Activated CD4-positive, alpha-beta T cell treated with anti-CD3 and anti-CD28 coated beads, Interleukin-2, amount 10 ng/mL, durations not matched to agents 24 days and 14 days (primary cell): ENCODE measurements at regions of chr12 and their contacts with region 1.

Region 1: DNA sequence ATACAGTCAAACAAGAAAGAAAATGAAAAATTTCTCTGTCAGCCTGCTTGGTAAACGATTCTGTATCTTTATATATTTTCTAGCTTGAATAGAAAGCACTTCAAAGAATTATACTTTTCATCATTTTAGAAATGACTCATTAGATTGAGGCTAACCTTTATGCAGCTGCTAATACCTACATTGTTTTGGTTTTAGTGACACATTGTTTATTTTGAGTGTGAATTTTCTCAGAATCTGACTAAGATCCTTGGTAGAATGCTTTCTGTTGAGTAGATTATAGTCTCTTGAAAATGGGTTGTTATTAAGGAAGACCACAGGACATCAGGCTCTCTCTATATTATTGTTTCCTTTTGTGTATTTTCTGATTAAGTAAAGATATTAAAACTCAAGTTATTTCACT is at the start of gene PMCH:
- DNase-seq: no peak
- H3K4me3 Mint-ChIP-seq: peak within 1 kb of the TSS; percentile 35
- H3K27ac Mint-ChIP-seq: peak within 1 kb of the TSS; percentile 87
- H3K4me1 Mint-ChIP-seq: peaks cover 17% of the 10 kb centered on the region
- H3K27me3 Mint-ChIP-seq: no peaks in the 10 kb centered on the region
- total RNA-seq, gene PMCH: 6.3 and 8.4 TPM in 2 replicates

Region 2: GRCh38 chr12:102119674-102120563 is 77.9 kb before region 1 on chr12 and contains the starts of genes NUP37 and PARPBP:
- intact Hi-C with region 1: loop called (anchors 2 kb)
- DNase-seq: peak; percentile 98
- H3K4me3 Mint-ChIP-seq: peak within 1 kb of the TSS; percentile 96
- H3K27ac Mint-ChIP-seq: peak within 1 kb of the TSS; percentile 94
- H3K4me1 Mint-ChIP-seq: peaks cover 35% of the 10 kb centered on the region
- H3K27me3 Mint-ChIP-seq: no peaks in the 10 kb centered on the region
- total RNA-seq, gene NUP37: 88.1 and 97.3 TPM in 2 replicates
- total RNA-seq, gene PARPBP: 22.9 TPM in 2 replicates

Region 3: DNA sequence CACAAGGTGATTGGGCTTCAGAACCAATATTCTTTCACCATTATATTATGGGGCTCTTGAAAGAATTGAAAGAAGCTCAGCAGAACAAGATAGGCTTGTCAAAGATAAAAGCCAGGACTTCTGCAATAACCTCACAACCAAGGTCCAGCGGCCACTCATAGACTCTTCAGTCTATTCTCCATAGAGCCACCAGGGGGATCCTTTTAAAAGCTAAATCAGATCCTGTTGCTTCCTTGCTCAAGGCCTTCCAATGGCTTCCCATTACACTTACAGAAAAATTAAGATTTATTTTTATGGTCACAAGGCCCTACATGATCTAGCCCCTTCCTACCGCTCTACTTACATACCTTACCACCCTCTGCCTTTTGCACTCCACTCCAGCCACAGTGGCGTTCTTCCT is 1128.4 kb after region 1 on chr12:
- intact Hi-C with region 1: no loop called
- DNase-seq: no peak
- H3K4me3 Mint-ChIP-seq: no peak overlapping the region
- H3K27ac Mint-ChIP-seq: no peak overlapping the region
- H3K4me1 Mint-ChIP-seq: no peaks in the 10 kb centered on the region
- H3K27me3 Mint-ChIP-seq: no peaks in the 10 kb centered on the region